Keratinocyte (primary cell): ENCODE measurements at regions of chr1 and their contacts with region 1.

Region 1: GRCh38 chr1:102262994-102263393 is 266.3 kb upstream of the OLFM3 start:
- DNase-seq: no peak
- H3K4me3 ChIP-seq: no peak overlapping the region
- H3K27ac ChIP-seq: no peak overlapping the region
- H3K4me1 ChIP-seq: no peaks in the 10 kb centered on the region
- H3K27me3 ChIP-seq: no peaks in the 10 kb centered on the region
- CTCF ChIP-seq: no peak

Region 2: DNA sequence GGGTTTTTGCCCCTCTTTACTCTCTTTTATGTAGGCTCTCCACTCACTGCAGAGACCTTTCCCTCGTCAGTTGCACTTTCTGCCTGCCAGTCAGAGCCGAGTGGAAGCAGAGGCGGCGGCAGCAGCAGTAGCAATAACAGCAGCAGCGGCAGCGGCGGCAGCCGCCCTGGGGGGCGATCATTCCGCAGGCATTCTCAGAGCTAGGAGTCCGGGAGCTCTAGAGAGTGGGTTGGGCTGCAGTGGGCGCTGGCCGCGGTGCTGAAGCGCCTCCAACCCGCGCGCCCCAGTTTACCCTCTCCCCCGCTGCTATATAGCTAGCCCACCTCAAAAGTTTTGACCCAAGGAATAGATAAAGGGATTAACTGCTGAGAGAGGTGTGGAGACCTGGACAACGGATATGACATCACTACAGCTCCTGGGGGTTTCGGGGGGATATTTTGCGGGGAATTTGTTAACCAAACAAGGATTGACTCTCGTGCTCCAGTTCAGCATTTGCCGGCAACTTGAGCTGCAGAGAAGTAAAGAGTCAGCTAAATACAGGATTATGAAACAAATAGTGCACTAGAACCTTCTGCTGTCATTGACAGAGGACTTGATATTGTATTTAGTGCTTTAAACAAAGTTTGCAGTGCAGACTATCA is 266.0 kb before region 1 on chr1 and contains the start of gene OLFM3:
- dilution Hi-C with region 1: no loop called
- DNase-seq: no peak
- H3K4me3 ChIP-seq: no peak within 1 kb of the TSS
- H3K27ac ChIP-seq: no peak within 1 kb of the TSS
- H3K4me1 ChIP-seq: no peaks in the 10 kb centered on the region
- H3K27me3 ChIP-seq: no peaks in the 10 kb centered on the region
- CTCF ChIP-seq: no peak
- polyA plus RNA-seq, gene OLFM3: not detected in 3 replicates

Region 3: DNA sequence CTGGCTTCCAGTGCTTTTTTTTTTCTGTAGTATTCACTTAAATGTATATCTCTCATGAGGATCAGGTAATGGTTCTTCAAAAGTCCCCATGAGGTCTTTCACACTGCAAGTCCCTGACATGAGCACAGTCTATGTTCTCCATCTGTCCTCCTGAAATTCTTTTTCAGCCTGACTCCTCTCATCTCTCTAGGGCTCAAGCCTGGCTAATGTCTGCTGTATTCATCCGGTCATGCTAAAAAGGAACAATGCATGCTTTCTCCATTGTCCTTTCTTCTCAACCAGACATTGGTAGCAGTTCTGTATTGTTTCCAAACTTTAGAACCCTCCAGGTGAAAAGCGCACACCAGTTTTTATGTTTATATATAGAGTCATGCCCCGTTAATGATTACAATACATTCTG is 102.1 kb after region 1 on chr1:
- dilution Hi-C with region 1: loop called (anchors 25 kb)
- DNase-seq: no peak
- H3K4me3 ChIP-seq: no peak overlapping the region
- H3K27ac ChIP-seq: no peak overlapping the region
- H3K4me1 ChIP-seq: no peaks in the 10 kb centered on the region
- H3K27me3 ChIP-seq: no peaks in the 10 kb centered on the region
- CTCF ChIP-seq: no peak